Activated naive CD8-positive, alpha-beta T cell treated with anti-CD3 and anti-CD28 coated beads, Interleukin-2, amount 10 ng/mL, durations not matched to agents 7 days and 5 days (primary cell): ENCODE measurements at regions of chr11 and their contacts with region 1.

Region 1: DNA sequence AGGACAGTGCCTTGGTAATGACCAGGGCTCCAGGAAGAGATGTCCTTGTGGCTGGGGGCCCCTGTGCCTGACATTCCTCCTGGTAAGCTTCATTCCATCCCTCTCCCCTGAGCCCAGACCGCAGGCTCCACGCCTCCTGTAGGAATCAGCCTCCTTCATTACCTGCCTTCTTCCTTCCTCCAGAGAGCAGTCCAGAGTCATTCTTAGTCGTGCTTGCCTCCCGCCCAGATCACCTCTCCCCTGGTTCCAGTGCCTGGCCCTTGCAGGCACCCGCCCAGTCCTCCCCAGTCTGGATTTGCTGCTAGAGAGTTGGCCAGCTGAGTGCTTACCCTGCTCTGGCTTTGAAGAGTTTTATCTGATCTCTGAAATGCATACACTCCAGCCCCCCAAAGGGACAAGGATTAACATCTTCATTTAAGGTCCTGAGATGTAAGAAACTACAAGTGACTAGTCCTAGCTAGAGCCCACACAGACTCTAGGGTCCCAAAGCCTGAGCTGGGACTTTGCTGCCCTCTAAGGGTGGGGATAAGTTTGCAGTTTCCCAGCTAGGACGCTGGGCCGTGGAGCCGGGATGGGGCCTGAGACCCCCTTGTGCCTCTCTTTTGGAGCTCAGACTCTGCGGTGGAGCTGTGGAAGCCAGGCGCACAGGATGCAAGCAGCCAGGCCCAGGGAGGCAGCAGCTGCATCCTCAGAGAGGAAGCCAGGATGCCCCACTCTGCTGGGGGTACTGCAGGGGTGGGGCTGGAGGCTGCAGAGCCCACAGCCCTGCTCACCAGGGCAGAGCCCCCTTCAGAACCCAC is 1.6 kb downstream of the NR1H3 start:
- DNase-seq: peak; percentile 52
- ATAC-seq: peak; percentile 83
- H3K4me3 Mint-ChIP-seq: no peak overlapping the region
- H3K27ac Mint-ChIP-seq: peak overlapping the region; percentile 79
- H3K4me1 Mint-ChIP-seq: peaks cover 23% of the 10 kb centered on the region
- H3K27me3 Mint-ChIP-seq: no peaks in the 10 kb centered on the region

Region 2: DNA sequence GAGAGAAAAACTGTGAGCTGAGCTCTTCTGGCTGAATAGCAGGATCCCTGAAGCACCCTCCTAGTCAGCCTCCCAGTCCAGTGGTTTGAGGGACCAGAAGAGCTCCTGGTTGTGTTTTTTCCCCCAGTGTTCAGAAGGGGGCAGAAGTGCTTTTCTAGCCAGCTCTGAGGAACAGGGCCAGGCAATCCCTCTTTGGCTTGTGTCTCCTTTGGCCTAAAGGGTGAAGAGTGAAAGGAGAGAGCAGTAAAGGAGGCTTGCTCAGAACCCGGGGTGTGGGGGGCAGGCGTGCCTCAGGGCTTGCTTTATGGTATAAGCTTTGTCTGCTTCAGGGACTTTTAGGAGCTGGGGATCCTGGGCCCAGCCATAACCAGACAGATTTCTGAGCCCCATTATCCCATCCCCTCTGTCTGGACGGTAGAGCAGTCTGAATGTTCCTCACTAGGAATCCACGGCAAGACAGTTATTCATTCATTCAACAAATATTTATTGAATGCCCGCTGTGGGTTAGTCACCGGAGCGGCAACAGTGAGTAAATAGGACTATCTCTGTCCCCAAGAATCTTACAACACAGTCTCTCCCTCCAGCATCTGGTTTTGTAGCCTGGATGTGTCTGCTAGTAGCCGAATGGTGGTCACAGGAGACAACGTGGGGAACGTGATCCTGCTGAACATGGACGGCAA is 25.2 kb before region 1 on chr11:
- POLR2A ChIA-PET with region 1: interaction called, 12 read pairs
- DNase-seq: no peak
- ATAC-seq: peak; percentile 49
- H3K4me3 Mint-ChIP-seq: peak overlapping the region; percentile 55
- H3K27ac Mint-ChIP-seq: peak overlapping the region; percentile 76
- H3K4me1 Mint-ChIP-seq: peaks cover 28% of the 10 kb centered on the region
- H3K27me3 Mint-ChIP-seq: no peaks in the 10 kb centered on the region